ENCODE measurements at regions of chr13 and their contacts with region 1.

Region 1: DNA sequence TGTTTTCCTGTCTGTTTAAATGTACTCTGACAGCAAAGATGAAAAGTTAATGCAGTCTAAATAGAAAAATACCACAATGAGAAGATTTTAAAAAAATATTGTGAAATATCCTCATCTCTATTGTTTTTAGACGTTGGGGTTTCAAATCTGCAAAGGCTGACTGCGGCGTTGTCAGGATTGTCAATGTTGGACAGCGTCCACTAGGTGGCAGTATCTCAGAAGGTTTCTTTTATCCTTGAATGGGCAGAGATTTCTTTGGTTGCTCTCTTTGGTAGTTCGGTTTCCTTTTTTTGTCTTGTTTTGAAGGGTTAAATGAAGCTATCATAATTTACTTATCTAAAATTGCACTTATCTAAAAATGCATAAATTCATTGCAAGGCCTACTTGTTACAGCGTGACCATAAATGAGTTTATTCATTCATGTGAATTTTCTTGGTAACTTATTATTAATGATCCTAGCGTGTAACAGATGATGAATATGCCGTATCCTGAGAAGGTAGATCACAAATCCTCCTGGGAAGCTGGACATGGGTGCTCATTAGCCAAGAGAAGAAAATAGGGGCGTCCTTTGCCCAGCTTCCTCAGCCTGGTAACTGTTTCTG is 21.1 kb downstream of the TNFSF11 start:
- DNase-seq: peak; percentile 50 to 86
- H3K4me3 ChIP-seq: no peak overlapping the region
- H3K27ac ChIP-seq: no peak overlapping the region
- H3K4me1 ChIP-seq: no peaks in the 10 kb centered on the region
- H3K27me3 ChIP-seq: peaks cover 0 to 2% (median 0%) of the 10 kb centered on the region in 3 donors
- CTCF ChIP-seq: peak in 5 of 7 experiments; percentile 28 to 83 (median 76)
- EP300 ChIP-seq: no peak
- POLR2A ChIP-seq: no peak

Region 2: GRCh38 chr13:42453091-42453645 is 141.9 kb before region 1 on chr13:
- intact Hi-C with region 1: no loop called
- DNase-seq: no peak
- H3K4me3 ChIP-seq: no peak overlapping the region
- H3K27ac ChIP-seq: no peak overlapping the region
- H3K4me1 ChIP-seq: no peaks in the 10 kb centered on the region
- H3K27me3 ChIP-seq: no peaks in the 10 kb centered on the region
- CTCF ChIP-seq: no peak
- EP300 ChIP-seq: no peak
- POLR2A ChIP-seq: no peak

Region 3: GRCh38 chr13:42696191-42696590 is 101.1 kb after region 1 on chr13:
- intact Hi-C with region 1: no loop called
- DNase-seq: no peak
- H3K4me3 ChIP-seq: no peak overlapping the region
- H3K27ac ChIP-seq: no peak overlapping the region
- H3K4me1 ChIP-seq: no peaks in the 10 kb centered on the region
- H3K27me3 ChIP-seq: no peaks in the 10 kb centered on the region
- CTCF ChIP-seq: no peak
- EP300 ChIP-seq: no peak
- POLR2A ChIP-seq: no peak

Region 4: DNA sequence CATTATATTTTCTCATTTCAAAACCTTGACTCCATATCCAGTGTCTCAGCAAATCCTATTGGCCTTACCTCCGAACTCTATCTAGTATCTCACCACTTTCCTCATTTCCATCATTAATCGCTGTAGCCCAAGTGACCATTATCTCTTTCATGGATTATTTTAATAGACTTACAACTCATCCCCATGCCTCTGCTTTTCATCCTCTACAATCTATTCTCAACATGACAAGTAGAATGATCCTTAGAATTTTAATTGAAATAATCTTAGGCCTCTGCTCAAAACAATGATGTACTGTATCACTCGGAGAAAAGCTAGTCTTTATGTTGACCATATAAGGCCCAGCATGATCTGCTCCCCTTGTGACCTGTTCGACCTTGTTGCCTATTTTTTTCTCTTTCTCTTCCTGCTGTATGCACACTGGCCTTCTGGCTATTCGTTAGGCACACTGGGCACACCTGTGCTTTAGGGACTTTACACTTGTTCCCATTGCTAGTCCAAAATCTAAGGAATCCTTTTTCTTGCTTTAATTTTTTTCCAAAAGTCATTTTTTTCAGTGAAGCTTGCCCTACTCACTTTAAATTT is 449.7 kb after region 1 on chr13:
- intact Hi-C with region 1: no loop called
- DNase-seq: peak in 1 of 2 donors; percentile 22
- H3K4me3 ChIP-seq: no peak overlapping the region
- H3K27ac ChIP-seq: peak overlapping the region; percentile 51 to 86 (median 67)
- H3K4me1 ChIP-seq: peaks cover 0 to 52% (median 25%) of the 10 kb centered on the region in 4 donors
- H3K27me3 ChIP-seq: no peaks in the 10 kb centered on the region
- CTCF ChIP-seq: no peak
- EP300 ChIP-seq: no peak
- POLR2A ChIP-seq: no peak

Region 5: GRCh38 chr13:43132257-43132656 is 537.2 kb after region 1 on chr13:
- intact Hi-C with region 1: loop called (anchors 10 kb)
- DNase-seq: peak; percentile 40 to 77
- H3K4me3 ChIP-seq: no peak overlapping the region
- H3K27ac ChIP-seq: no peak overlapping the region
- H3K4me1 ChIP-seq: peaks cover 0 to 11% (median 3%) of the 10 kb centered on the region in 4 donors
- H3K27me3 ChIP-seq: peaks cover 0 to 7% (median 0%) of the 10 kb centered on the region in 3 donors
- CTCF ChIP-seq: peak in 3 of 7 experiments; percentile 20 to 65 (median 33)
- EP300 ChIP-seq: no peak
- POLR2A ChIP-seq: no peak

Measured in stomach (tissue), 19 donors.